Caco-2 (cell line): ENCODE measurements at regions of chr20 and their contacts with region 1.

Region 1: DNA sequence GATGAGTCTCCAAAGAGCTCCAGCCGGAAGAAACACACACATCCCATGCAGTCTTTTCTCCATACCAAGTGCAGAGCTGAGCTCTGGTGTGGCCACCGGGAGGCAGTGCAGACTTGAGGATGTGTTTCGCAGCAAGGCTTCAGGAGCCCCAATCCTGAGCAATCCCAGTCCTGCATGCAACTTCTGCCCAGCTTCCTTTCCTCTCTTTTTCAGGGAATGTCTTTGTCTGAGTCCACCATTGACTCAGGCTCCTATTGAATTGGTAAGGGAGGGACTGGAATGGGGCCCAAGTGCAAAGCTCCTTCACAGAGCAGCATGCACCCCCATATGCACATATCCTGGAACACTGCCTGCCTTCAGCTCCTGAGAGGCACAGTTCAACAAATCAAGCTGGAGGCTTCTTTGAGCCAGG is 50.5 kb upstream of the ASIP start:
- DNase-seq: peak; percentile 88 to 89
- H3K4me3 ChIP-seq: no peak overlapping the region
- H3K4me3 Mint-ChIP-seq: no peak overlapping the region
- H3K27ac Mint-ChIP-seq: no peak overlapping the region
- H3K4me1 ChIP-seq: no peaks in the 10 kb centered on the region
- H3K4me1 Mint-ChIP-seq: no peaks in the 10 kb centered on the region
- H3K27me3 ChIP-seq: no peaks in the 10 kb centered on the region; the same call in 1 of the 2 replicates
- H3K27me3 Mint-ChIP-seq: peaks cover 9% of the 10 kb centered on the region
- CTCF ChIP-seq: peak; percentile 97 to 99

Region 2: DNA sequence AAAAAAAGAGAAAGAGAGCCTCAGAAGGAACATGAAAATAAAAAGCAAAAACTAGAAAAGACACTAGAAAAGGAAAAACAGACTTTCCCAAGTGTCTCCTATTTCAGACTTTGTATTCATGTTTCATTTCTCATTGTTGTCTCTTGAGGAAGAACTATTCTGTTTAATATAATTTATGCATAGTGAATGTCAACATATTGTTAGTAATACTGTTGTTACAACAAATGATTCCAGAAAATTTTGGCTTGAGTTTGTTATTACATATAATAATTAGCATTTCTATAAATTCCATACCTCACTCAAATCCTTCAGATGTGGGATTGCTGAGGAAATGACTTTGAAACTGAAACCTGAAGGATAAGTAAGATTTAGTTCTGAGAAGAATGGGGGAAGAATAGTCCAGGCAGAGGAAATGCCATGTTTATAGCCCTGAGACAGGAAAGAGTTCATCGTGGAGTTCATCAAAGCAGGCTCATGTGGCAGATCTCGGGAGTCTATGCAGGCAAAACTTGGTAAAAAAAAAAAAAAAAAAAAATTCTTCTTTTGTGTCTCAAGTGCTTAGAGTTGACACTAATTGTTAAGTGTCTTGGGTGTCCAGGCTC is 25.6 kb before region 1 on chr20:
- CTCF ChIA-PET with region 1: no interaction called
- POLR2A ChIA-PET with region 1: no interaction called
- intact Hi-C with region 1: no loop called
- DNase-seq: no peak
- H3K4me3 ChIP-seq: no peak overlapping the region
- H3K4me3 Mint-ChIP-seq: no peak overlapping the region
- H3K27ac Mint-ChIP-seq: no peak overlapping the region
- H3K4me1 ChIP-seq: no peaks in the 10 kb centered on the region
- H3K4me1 Mint-ChIP-seq: no peaks in the 10 kb centered on the region
- H3K27me3 ChIP-seq: no peaks in the 10 kb centered on the region
- H3K27me3 Mint-ChIP-seq: no peaks in the 10 kb centered on the region
- CTCF ChIP-seq: no peak

Region 3: GRCh38 chr20:34215711-34216381 is 25.2 kb after region 1 on chr20:
- CTCF ChIA-PET with region 1: interaction called, 15 read pairs
- POLR2A ChIA-PET with region 1: no interaction called
- intact Hi-C with region 1: no loop called
- DNase-seq: peak; percentile 90 to 93
- H3K4me3 ChIP-seq: peak overlapping the region; percentile 53
- H3K4me3 Mint-ChIP-seq: no peak overlapping the region
- H3K27ac Mint-ChIP-seq: peak overlapping the region; percentile 71
- H3K4me1 ChIP-seq: no peaks in the 10 kb centered on the region; the same call in 1 of the 2 replicates
- H3K4me1 Mint-ChIP-seq: no peaks in the 10 kb centered on the region
- H3K27me3 ChIP-seq: no peaks in the 10 kb centered on the region; the same call in 1 of the 2 replicates
- H3K27me3 Mint-ChIP-seq: peaks cover 6% of the 10 kb centered on the region
- CTCF ChIP-seq: peak in 1 of 2 experiments; percentile 19

Region 4: GRCh38 chr20:34231634-34232033 is 40.9 kb after region 1 on chr20:
- CTCF ChIA-PET with region 1: no interaction called
- POLR2A ChIA-PET with region 1: no interaction called
- intact Hi-C with region 1: no loop called
- DNase-seq: no peak
- H3K4me3 ChIP-seq: no peak overlapping the region
- H3K4me3 Mint-ChIP-seq: no peak overlapping the region
- H3K27ac Mint-ChIP-seq: no peak overlapping the region
- H3K4me1 ChIP-seq: no peaks in the 10 kb centered on the region
- H3K4me1 Mint-ChIP-seq: no peaks in the 10 kb centered on the region
- H3K27me3 ChIP-seq: 0 out of 2 replicates have a peak, but pooled peaks cover 2% of the 10 kb centered on the region
- H3K27me3 Mint-ChIP-seq: peaks cover 6% of the 10 kb centered on the region
- CTCF ChIP-seq: no peak

Region 5: GRCh38 chr20:34473262-34473883 is 282.7 kb after region 1 on chr20:
- CTCF ChIA-PET with region 1: no interaction called
- POLR2A ChIA-PET with region 1: no interaction called
- intact Hi-C with region 1: loop called (anchors 2 kb)
- DNase-seq: peak; percentile 88 to 93
- H3K4me3 ChIP-seq: no peak overlapping the region
- H3K4me3 Mint-ChIP-seq: no peak overlapping the region
- H3K27ac Mint-ChIP-seq: no peak overlapping the region
- H3K4me1 ChIP-seq: peaks cover 8% of the 10 kb centered on the region; the same call in 1 of the 2 replicates
- H3K4me1 Mint-ChIP-seq: no peaks in the 10 kb centered on the region
- H3K27me3 ChIP-seq: no peaks in the 10 kb centered on the region
- H3K27me3 Mint-ChIP-seq: no peaks in the 10 kb centered on the region
- CTCF ChIP-seq: peak; percentile 88 to 91

Region 6: DNA sequence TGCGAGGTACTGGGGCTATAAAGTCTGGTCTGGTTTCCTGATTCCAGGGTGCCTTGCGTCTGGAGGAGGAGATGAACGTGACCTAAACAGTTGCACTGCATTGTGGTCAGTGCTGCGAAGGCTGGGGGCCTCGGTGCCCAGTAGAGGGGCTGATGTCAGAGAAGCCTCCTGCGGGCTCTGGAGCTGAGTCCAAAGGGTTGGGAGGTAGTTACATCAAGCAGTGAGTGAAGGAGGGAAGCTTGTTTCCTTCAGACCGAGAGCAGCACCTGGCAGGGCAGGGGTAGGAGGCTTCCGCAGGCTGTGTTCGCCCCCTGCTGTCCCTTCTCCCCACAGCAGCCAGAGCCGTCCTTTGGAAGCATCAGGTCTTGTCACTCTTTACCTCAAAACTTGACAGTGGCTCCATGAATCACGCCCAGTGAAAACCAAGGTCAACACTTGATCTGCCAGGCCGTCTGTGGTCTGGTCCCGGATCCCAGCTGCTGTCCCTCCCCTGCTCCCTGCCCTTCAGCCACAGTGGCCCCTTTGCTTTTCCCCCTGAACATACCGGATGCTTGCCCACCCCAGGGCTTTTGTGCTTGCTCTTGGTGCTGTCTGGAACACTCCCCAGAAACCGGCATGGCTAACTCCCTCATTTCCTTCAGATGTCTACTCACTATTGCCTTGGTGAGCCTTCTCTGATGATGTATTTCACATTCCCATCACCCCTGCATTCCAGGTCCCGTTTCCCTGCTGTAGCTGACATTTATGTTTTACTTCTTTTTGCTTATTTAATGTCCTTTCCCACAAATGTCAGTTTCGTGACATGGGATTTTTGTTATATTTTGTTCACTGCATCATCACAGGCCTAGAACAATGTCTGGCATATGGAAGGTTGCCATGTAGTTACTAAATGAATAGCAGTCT is 332.5 kb after region 1 on chr20:
- CTCF ChIA-PET with region 1: interaction called, 46 read pairs
- POLR2A ChIA-PET with region 1: no interaction called
- intact Hi-C with region 1: loop called (anchors 1 kb)
- DNase-seq: peak; percentile 89 to 93
- H3K4me3 ChIP-seq: no peak overlapping the region
- H3K4me3 Mint-ChIP-seq: no peak overlapping the region
- H3K27ac Mint-ChIP-seq: peak overlapping the region; percentile 25
- H3K4me1 ChIP-seq: peaks cover 46% of the 10 kb centered on the region
- H3K4me1 Mint-ChIP-seq: peaks cover 50% of the 10 kb centered on the region
- H3K27me3 ChIP-seq: no peaks in the 10 kb centered on the region
- H3K27me3 Mint-ChIP-seq: no peaks in the 10 kb centered on the region
- CTCF ChIP-seq: peak; percentile 96 to 99

Region 7: DNA sequence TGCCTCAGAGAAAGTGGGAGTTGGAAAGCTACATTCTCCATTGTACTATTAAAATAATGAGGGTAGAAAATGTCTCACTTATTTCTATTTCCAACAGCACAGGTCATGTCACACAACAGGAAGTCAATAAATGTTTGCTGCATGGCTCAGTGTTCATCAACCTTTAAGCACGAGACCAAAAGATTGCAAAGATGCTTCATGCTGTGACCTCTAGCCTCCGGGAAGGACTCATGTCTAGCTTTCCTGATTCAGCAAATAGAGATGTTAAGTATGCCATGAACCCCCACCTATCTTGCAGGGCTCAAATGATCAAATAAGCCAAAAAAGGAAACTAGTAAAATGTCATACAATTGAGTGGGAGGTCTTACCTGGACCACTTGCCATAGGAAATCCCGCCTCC is 577.4 kb after region 1 on chr20:
- CTCF ChIA-PET with region 1: interaction called, 26 read pairs
- POLR2A ChIA-PET with region 1: no interaction called
- intact Hi-C with region 1: loop called (anchors 1 kb)
- DNase-seq: no peak
- H3K4me3 ChIP-seq: no peak overlapping the region
- H3K4me3 Mint-ChIP-seq: no peak overlapping the region
- H3K27ac Mint-ChIP-seq: no peak overlapping the region
- H3K4me1 ChIP-seq: 0 out of 2 replicates have a peak, but pooled peaks cover 4% of the 10 kb centered on the region
- H3K4me1 Mint-ChIP-seq: peaks cover 7% of the 10 kb centered on the region
- H3K27me3 ChIP-seq: no peaks in the 10 kb centered on the region
- H3K27me3 Mint-ChIP-seq: no peaks in the 10 kb centered on the region
- CTCF ChIP-seq: no peak